ENCODE measurements at regions of chr19 and their contacts with region 1.

Region 1: DNA sequence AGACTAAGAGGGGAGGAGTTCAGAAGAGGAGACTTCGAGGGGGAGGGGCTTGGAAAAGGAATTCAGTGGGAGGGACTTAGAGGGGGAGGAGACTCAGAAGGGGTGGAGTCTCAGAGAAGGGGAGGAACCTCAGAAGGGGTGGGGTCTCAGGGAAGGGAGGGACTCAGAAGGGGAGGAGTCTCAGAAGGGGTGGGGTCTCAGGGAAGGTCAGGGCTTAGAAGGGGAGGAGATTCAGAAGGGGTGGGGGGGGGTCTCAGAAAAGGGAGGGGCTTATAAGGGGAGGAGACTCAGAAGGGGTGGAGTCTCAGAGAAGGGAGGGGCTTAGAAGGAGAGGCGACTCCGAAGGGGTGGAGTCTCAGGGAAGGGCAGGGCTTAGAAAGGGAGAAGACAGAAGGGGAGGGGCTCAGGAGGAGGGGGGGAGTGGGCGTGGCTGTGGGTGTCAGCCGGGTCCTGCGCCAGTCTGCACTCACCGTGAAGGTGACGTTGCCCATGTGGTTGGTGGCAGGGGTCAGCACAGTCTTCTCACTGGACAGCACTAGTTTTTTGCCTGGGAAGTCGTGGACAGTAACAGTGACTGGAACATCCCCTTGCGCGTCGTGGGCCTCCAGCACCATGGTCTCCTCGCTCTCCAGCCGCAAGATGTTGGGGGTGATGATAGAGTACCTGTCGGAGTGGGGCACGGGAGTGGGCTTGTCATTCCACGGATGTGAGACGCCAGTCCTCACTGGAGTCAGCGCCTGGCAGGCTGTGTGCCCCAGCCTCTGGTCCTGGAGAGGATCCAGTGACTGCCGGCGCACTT is 1.5 kb downstream of the C3 start:
- DNase-seq: peak in 3 of 14 experiments; percentile 31 to 75 (median 63)
- ATAC-seq: peak; percentile 89
- H3K4me3 ChIP-seq: no peak overlapping the region
- H3K4me3 Mint-ChIP-seq: no peak overlapping the region
- H3K27ac ChIP-seq: no peak overlapping the region
- H3K27ac Mint-ChIP-seq: no peak overlapping the region
- H3K4me1 ChIP-seq: peaks cover 8% of the 10 kb centered on the region
- H3K4me1 Mint-ChIP-seq: peaks cover 8% of the 10 kb centered on the region
- H3K27me3 ChIP-seq: no peaks in the 10 kb centered on the region
- H3K27me3 Mint-ChIP-seq: peaks cover 4% of the 10 kb centered on the region
- CTCF ChIP-seq: no peak

Region 2: GRCh38 chr19:6372594-6373095 is 346.3 kb before region 1 on chr19 and contains the start of gene ALKBH7:
- CTCF ChIA-PET with region 1: no interaction called
- POLR2A ChIA-PET with region 1: no interaction called
- intact Hi-C with region 1: no loop called
- DNase-seq: peak; percentile 89 to 100 (median 96)
- ATAC-seq: peak; percentile 75
- H3K4me3 ChIP-seq: peak within 1 kb of the TSS; percentile 66
- H3K4me3 Mint-ChIP-seq: peak within 1 kb of the TSS; percentile 96
- H3K27ac ChIP-seq: peak within 1 kb of the TSS; percentile 84 to 87
- H3K27ac Mint-ChIP-seq: peak within 1 kb of the TSS; percentile 89
- H3K4me1 ChIP-seq: peaks cover 18% of the 10 kb centered on the region
- H3K4me1 Mint-ChIP-seq: peaks cover 19% of the 10 kb centered on the region
- H3K27me3 ChIP-seq: no peaks in the 10 kb centered on the region
- H3K27me3 Mint-ChIP-seq: no peaks in the 10 kb centered on the region
- CTCF ChIP-seq: no peak
- total RNA-seq, gene ALKBH7: 75.3 to 78.7 TPM

Region 3: DNA sequence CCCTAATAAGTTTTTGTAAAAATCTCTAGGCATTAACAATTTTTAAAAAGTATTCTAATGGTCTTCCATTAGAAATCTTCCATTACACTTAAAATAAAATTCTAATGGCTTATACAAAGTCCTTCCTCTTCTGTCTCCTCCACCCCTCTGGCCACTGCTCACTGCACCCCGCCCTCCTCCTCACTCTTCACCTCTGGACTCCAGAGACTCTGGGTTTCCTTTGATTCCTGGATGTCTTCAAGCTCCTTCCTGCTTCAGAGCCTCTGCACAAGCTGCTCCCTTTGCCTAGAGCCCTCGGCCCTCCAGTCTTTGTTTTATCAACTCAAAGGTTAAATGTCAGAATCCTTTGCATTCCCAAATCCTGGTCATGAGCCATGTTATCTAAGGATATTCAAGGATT is 69.8 kb before region 1 on chr19:
- CTCF ChIA-PET with region 1: no interaction called
- POLR2A ChIA-PET with region 1: no interaction called
- intact Hi-C with region 1: loop called in 1 of 2 experiments (anchors 5 kb)
- DNase-seq: no peak
- ATAC-seq: no peak
- H3K4me3 ChIP-seq: no peak overlapping the region
- H3K4me3 Mint-ChIP-seq: no peak overlapping the region
- H3K27ac ChIP-seq: no peak overlapping the region
- H3K27ac Mint-ChIP-seq: no peak overlapping the region
- H3K4me1 ChIP-seq: peaks cover 26% of the 10 kb centered on the region
- H3K4me1 Mint-ChIP-seq: peaks cover 14% of the 10 kb centered on the region
- H3K27me3 ChIP-seq: no peaks in the 10 kb centered on the region
- H3K27me3 Mint-ChIP-seq: no peaks in the 10 kb centered on the region
- CTCF ChIP-seq: no peak

Region 4: GRCh38 chr19:6680151-6680694 is 38.7 kb before region 1 on chr19:
- CTCF ChIA-PET with region 1: no interaction called
- POLR2A ChIA-PET with region 1: no interaction called
- intact Hi-C with region 1: loop called in 1 of 2 experiments (anchors 5 kb)
- DNase-seq: no peak
- ATAC-seq: no peak
- H3K4me3 ChIP-seq: no peak overlapping the region
- H3K4me3 Mint-ChIP-seq: no peak overlapping the region
- H3K27ac ChIP-seq: no peak overlapping the region
- H3K27ac Mint-ChIP-seq: no peak overlapping the region
- H3K4me1 ChIP-seq: peaks cover 24% of the 10 kb centered on the region
- H3K4me1 Mint-ChIP-seq: peaks cover 19% of the 10 kb centered on the region
- H3K27me3 ChIP-seq: no peaks in the 10 kb centered on the region
- H3K27me3 Mint-ChIP-seq: no peaks in the 10 kb centered on the region
- CTCF ChIP-seq: no peak

Measured in CD4-positive, alpha-beta T cell (primary cell).